OCI-LY7 (cell line): ENCODE measurements at regions of chr5 and their contacts with region 1.

Region 1: GRCh38 chr5:177390363-177391300 is 6.4 kb downstream of the SLC34A1 start:
- DNase-seq: peak; percentile 91
- H3K4me3 ChIP-seq: no peak overlapping the region
- H3K27ac ChIP-seq: peak overlapping the region; percentile 72
- H3K4me1 ChIP-seq: peaks cover 60% of the 10 kb centered on the region
- CTCF ChIP-seq: peak; percentile 99

Region 2: GRCh38 chr5:177317959-177318377 is 72.7 kb before region 1 on chr5:
- CTCF ChIA-PET with region 1: no interaction called
- POLR2A ChIA-PET with region 1: no interaction called
- intact Hi-C with region 1: loop called (anchors 1 kb)
- DNase-seq: peak; percentile 82
- H3K4me3 ChIP-seq: no peak overlapping the region
- H3K27ac ChIP-seq: no peak overlapping the region
- H3K4me1 ChIP-seq: peaks cover 11% of the 10 kb centered on the region
- CTCF ChIP-seq: peak; percentile 99

Region 3: GRCh38 chr5:177370488-177371119 is 20.0 kb before region 1 on chr5:
- CTCF ChIA-PET with region 1: interaction called, 11 read pairs
- POLR2A ChIA-PET with region 1: interaction called, 7 read pairs
- intact Hi-C with region 1: no loop called
- DNase-seq: peak; percentile 87
- H3K4me3 ChIP-seq: peak overlapping the region; percentile 10
- H3K27ac ChIP-seq: peak overlapping the region; percentile 56
- H3K4me1 ChIP-seq: peaks cover 42% of the 10 kb centered on the region
- CTCF ChIP-seq: peak; percentile 63

Region 4: DNA sequence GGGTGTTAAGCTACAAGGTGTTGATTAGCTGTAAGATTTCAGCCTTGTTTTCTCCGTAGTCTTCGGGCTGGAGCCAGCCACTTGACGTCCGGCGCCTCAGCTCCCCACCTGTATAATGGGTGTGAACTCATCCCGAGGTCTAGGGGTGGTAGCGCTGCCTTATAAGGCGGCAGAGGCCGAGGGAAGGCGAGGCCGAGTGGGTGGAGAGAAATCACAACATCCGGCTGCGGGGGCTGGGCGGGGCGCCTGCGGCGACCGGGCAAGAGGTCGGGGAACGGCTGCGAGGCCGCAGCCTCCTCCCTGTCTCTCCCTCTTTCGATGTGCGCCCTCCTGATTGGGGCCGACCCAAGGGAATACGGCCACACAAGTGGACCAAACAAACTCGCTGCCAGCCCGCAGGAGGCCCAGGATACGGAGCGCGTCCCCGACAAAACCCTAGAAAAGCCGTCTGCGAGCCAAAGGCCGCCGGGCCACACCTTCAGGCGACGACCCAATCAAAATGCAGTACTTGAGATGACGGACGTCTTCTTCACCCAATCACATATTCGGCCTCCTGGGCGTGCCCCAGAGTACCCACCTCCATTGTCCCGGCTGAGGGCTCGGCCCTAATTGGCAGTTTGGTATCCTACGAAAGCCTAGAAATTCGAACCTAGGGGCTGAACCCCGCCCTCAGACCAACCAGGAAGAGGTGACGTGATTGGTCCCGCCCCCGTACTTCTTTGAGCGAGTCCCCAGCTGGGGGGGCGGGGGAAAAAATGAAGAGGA is 35.4 kb after region 1 on chr5:
- CTCF ChIA-PET with region 1: interaction called, 8 read pairs
- POLR2A ChIA-PET with region 1: interaction called, 4 read pairs
- intact Hi-C with region 1: loop called (anchors 1 kb)
- DNase-seq: peak; percentile 100
- H3K4me3 ChIP-seq: peak overlapping the region; percentile 68
- H3K27ac ChIP-seq: peak overlapping the region; percentile 62
- H3K4me1 ChIP-seq: peaks cover 49% of the 10 kb centered on the region
- CTCF ChIP-seq: no peak

Region 5: GRCh38 chr5:177446200-177447065 is 55.8 kb after region 1 on chr5 and contains the start of gene PRR7:
- CTCF ChIA-PET with region 1: interaction called, 3 read pairs
- POLR2A ChIA-PET with region 1: interaction called, 5 read pairs
- intact Hi-C with region 1: loop called (anchors 1 kb)
- DNase-seq: peak; percentile 87
- H3K4me3 ChIP-seq: peak within 1 kb of the TSS; percentile 72
- H3K27ac ChIP-seq: no peak within 1 kb of the TSS
- H3K4me1 ChIP-seq: peaks cover 47% of the 10 kb centered on the region
- CTCF ChIP-seq: no peak; the same call in 1 of the 2 replicates
- total RNA-seq, gene PRR7: 7.0 and 13.6 TPM in 2 replicates

Region 6: GRCh38 chr5:177497292-177498033 is 106.8 kb after region 1 on chr5 and contains the start of gene PDLIM7:
- CTCF ChIA-PET with region 1: interaction called, 3 read pairs
- POLR2A ChIA-PET with region 1: interaction called, 4 read pairs
- intact Hi-C with region 1: loop called (anchors 2 kb)
- DNase-seq: peak; percentile 96
- H3K4me3 ChIP-seq: peak within 1 kb of the TSS; percentile 81
- H3K27ac ChIP-seq: peak within 1 kb of the TSS; percentile 29
- H3K4me1 ChIP-seq: peaks cover 60% of the 10 kb centered on the region
- CTCF ChIP-seq: no peak
- total RNA-seq, gene PDLIM7: 38.8 and 41.4 TPM in 2 replicates